ENCODE measurements at regions of chr2 and their contacts with region 1.

Region 1: GRCh38 chr2:134245340-134245984 is 8.4 kb upstream of the MGAT5 start:
- DNase-seq: peak; percentile 43
- ATAC-seq: peak; percentile 35
- H3K4me3 Mint-ChIP-seq: peak overlapping the region; percentile 58
- H3K27ac Mint-ChIP-seq: peak overlapping the region; percentile 75
- H3K4me1 Mint-ChIP-seq: peaks cover 95% of the 10 kb centered on the region
- H3K27me3 Mint-ChIP-seq: no peaks in the 10 kb centered on the region
- CTCF ChIP-seq: peak; percentile 19

Region 2: GRCh38 chr2:133886735-133887660 is 358.5 kb before region 1 on chr2:
- CTCF ChIA-PET with region 1: interaction called, 47 read pairs
- POLR2A ChIA-PET with region 1: interaction called, 4 read pairs
- intact Hi-C with region 1: loop called (anchors 1 kb)
- DNase-seq: peak; percentile 36
- ATAC-seq: peak; percentile 70
- H3K4me3 Mint-ChIP-seq: no peak overlapping the region
- H3K27ac Mint-ChIP-seq: no peak overlapping the region
- H3K4me1 Mint-ChIP-seq: peaks cover 10% of the 10 kb centered on the region
- H3K27me3 Mint-ChIP-seq: peaks cover 7% of the 10 kb centered on the region
- CTCF ChIP-seq: no peak

Region 3: GRCh38 chr2:134198006-134198634 is 47.3 kb before region 1 on chr2:
- CTCF ChIA-PET with region 1: interaction called, 11 read pairs
- POLR2A ChIA-PET with region 1: no interaction called
- intact Hi-C with region 1: no loop called
- DNase-seq: no peak
- ATAC-seq: peak; percentile 25
- H3K4me3 Mint-ChIP-seq: peak overlapping the region; percentile 53
- H3K27ac Mint-ChIP-seq: peak overlapping the region; percentile 60
- H3K4me1 Mint-ChIP-seq: peaks cover 87% of the 10 kb centered on the region
- H3K27me3 Mint-ChIP-seq: no peaks in the 10 kb centered on the region
- CTCF ChIP-seq: no peak

Region 4: DNA sequence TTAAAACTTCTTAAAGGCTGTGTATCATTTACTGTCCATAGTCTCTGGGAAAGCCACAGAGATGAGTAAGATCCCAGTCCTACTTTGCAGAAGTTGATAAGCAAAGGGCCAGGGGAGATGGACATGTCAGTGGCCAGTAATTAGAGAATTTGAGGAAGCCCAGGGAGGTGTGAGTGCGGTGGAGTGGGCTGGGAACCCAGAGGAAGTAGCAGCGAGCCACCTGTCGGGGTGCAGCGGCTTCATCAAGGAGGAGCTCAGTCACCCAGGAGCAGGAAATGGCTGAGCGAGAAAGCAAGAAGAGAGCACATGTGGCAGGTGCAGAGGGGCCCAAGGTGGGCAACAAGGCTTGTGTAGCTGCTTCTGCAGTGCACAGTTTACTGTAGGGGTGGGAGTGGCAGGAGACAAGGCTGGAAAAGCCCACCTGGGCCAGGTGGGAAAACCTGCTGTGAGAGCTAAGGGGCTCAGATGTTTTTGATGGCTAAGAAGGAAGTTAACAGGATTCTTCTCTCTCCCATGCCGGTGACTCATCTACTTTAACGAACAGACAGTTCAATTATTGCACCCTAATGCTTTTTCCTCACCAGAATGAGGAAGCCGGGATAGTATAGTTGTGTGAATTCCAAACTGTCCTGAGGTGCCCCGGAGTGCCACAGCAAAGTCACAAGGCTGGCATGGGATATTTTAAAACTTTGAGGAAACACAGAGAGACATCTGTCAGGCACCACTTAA is 26.4 kb before region 1 on chr2:
- CTCF ChIA-PET with region 1: interaction called, 7 read pairs
- POLR2A ChIA-PET with region 1: interaction called, 3 read pairs
- intact Hi-C with region 1: loop called (anchors 1 kb)
- DNase-seq: peak; percentile 38
- ATAC-seq: peak; percentile 66
- H3K4me3 Mint-ChIP-seq: peak overlapping the region; percentile 53
- H3K27ac Mint-ChIP-seq: peak overlapping the region; percentile 89
- H3K4me1 Mint-ChIP-seq: peaks cover 71% of the 10 kb centered on the region
- H3K27me3 Mint-ChIP-seq: no peaks in the 10 kb centered on the region
- CTCF ChIP-seq: no peak

Region 5: GRCh38 chr2:134261398-134262131 is 16.1 kb after region 1 on chr2:
- CTCF ChIA-PET with region 1: interaction called, 28 read pairs
- POLR2A ChIA-PET with region 1: interaction called, 66 read pairs
- intact Hi-C with region 1: loop called (anchors 2 kb)
- DNase-seq: no peak
- ATAC-seq: peak; percentile 66
- H3K4me3 Mint-ChIP-seq: peak overlapping the region; percentile 38
- H3K27ac Mint-ChIP-seq: peak overlapping the region; percentile 97
- H3K4me1 Mint-ChIP-seq: peaks cover 91% of the 10 kb centered on the region
- H3K27me3 Mint-ChIP-seq: no peaks in the 10 kb centered on the region
- CTCF ChIP-seq: no peak

Region 6: DNA sequence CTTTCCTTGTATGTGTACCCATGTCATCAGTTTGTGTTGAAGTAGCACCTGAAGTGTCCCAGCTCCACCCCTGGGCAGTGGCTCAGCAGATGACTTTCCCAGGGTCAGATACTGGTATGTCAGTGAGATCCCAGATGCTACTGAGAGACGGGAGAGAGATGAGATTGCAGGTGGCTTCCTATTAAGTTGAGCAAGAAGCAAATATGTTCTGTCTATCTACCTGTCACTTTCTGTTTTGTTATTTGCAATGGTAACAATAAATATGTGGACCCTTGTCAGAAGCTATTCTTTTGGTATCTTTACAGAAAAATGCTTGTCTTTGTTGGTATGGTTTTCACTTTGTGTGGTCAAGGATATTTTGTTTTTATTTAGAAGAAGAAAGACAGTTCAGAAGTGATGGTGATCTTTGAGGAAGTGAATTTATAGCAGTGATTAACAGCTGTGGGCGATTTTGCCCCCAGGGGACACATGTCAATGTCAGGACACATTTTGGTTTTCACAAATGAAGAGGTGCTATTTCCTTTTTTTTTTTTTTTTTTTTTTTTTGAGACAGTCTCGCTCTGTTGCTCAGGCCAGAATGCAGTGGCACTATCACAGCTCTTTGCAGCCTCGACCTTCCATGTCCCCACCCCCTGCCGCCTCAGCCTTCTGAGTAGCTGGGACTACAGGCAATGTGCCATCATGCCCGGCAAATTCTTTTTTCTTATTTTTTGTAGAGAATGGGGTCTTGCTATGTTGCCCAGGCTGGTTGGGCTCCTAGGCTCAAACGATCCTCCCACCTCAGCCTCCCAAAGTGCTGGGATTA is 29.8 kb after region 1 on chr2:
- CTCF ChIA-PET with region 1: interaction called, 27 read pairs
- POLR2A ChIA-PET with region 1: interaction called, 15 read pairs
- intact Hi-C with region 1: loop called (anchors 1 kb)
- DNase-seq: peak; percentile 54
- ATAC-seq: peak; percentile 85
- H3K4me3 Mint-ChIP-seq: peak overlapping the region; percentile 77
- H3K27ac Mint-ChIP-seq: peak overlapping the region; percentile 94
- H3K4me1 Mint-ChIP-seq: peaks cover 98% of the 10 kb centered on the region
- H3K27me3 Mint-ChIP-seq: no peaks in the 10 kb centered on the region
- CTCF ChIP-seq: no peak

Region 7: DNA sequence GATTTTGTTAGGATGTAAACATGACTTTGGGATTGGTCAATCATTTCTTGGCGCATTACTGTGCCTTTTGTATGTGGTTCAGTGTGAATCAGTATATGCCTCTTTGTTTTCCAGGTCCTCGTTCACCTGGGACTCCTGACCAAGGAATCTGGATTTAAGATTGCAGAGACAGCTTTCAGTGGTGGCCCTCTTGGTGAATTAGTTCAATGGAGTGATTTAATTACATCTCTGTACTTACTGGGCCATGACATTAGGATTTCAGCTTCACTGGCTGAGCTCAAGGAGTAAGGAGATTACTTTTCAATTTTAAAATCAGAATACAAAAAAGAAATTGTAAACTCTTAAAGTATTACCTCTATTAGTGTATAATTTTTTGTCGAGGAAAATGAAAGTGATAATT is 96.0 kb after region 1 on chr2:
- CTCF ChIA-PET with region 1: interaction called, 12 read pairs
- POLR2A ChIA-PET with region 1: no interaction called
- intact Hi-C with region 1: loop called (anchors 5 kb)
- DNase-seq: no peak
- ATAC-seq: no peak
- H3K4me3 Mint-ChIP-seq: no peak overlapping the region
- H3K27ac Mint-ChIP-seq: no peak overlapping the region
- H3K4me1 Mint-ChIP-seq: peaks cover 51% of the 10 kb centered on the region
- H3K27me3 Mint-ChIP-seq: no peaks in the 10 kb centered on the region
- CTCF ChIP-seq: no peak